Endothelial cell of umbilical vein (primary cell): ENCODE measurements at regions of chr16 and their contacts with region 1.

Region 1: DNA sequence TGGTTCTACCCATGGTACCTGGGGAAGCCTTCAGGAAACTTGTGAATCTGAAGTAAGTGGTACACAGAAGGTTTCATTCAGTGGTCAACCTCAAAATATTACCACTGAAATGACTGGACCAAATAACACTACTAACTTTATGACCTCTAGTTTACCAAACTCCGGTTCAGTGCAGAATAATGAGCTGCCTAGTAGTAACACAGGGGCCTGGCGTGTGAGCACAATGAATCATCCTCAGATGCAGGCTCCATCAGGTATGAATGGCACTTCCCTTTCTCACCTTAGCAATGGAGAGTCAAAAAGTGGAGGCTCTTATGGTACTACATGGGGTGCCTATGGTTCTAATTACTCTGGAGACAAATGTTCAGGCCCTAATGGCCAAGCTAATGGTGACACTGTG is 55.9 kb upstream of the SLC5A11 start:
- DNase-seq: no peak
- H3K4me3 ChIP-seq: no peak overlapping the region
- H3K27ac ChIP-seq: no peak overlapping the region
- H3K4me1 ChIP-seq: no peaks in the 10 kb centered on the region
- H3K27me3 ChIP-seq: no peaks in the 10 kb centered on the region
- CTCF ChIP-seq: no peak
- POLR2A ChIP-seq: no peak

Region 2: DNA sequence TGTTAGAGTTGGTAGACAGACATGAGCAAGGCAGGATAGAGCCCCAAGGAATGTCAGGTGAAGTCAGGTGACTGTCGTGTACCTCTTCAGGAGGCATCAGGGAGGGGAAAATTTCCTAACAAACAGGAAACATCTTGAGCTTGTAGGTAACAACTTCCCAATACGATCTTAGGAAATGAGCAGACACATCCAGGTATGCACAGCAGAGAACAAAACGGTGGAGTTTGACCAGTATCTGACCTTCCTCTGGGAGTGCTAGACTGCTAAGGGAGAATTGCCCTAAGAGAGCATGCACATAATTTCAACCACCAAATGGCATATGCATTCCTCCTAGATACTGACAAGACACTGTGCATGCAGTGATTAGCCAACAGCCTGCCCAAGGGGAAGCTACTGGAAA is 371.2 kb before region 1 on chr16:
- CTCF ChIA-PET with region 1: no interaction called
- POLR2A ChIA-PET with region 1: no interaction called
- dilution Hi-C with region 1: no loop called
- intact Hi-C with region 1: no loop called
- DNase-seq: no peak
- H3K4me3 ChIP-seq: no peak overlapping the region
- H3K27ac ChIP-seq: no peak overlapping the region
- H3K4me1 ChIP-seq: no peaks in the 10 kb centered on the region
- H3K27me3 ChIP-seq: no peaks in the 10 kb centered on the region
- CTCF ChIP-seq: no peak
- POLR2A ChIP-seq: no peak

Region 3: DNA sequence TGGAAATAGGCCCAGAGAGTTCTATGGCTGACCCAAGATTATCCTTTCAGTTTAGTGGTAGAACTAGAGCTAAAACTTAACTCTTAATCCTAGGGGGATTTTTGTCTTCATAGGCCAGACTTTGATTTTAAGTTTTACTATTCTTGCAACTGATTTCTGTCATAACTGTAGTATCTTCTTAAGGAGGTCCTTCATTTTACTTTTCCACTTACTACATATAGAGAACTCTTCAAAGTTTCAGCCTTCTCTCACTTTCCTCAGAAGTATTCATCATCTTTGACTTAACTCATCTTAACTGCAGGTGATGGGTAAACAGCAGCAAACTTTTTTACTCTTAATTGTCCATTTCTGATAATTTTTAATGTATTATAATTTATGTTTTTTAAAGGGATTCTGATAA is 227.1 kb before region 1 on chr16:
- CTCF ChIA-PET with region 1: interaction called, 3 read pairs
- POLR2A ChIA-PET with region 1: no interaction called
- dilution Hi-C with region 1: no loop called
- intact Hi-C with region 1: loop called (anchors 5 kb)
- DNase-seq: no peak
- H3K4me3 ChIP-seq: no peak overlapping the region
- H3K27ac ChIP-seq: no peak overlapping the region
- H3K4me1 ChIP-seq: peaks cover under 1% of the 10 kb centered on the region
- H3K27me3 ChIP-seq: no peaks in the 10 kb centered on the region
- CTCF ChIP-seq: no peak
- POLR2A ChIP-seq: no peak

Region 4: GRCh38 chr16:24753437-24753836 is 36.4 kb before region 1 on chr16:
- CTCF ChIA-PET with region 1: no interaction called
- POLR2A ChIA-PET with region 1: no interaction called
- dilution Hi-C with region 1: no loop called
- intact Hi-C with region 1: no loop called
- DNase-seq: peak; percentile 26
- H3K4me3 ChIP-seq: no peak overlapping the region
- H3K27ac ChIP-seq: no peak overlapping the region
- H3K4me1 ChIP-seq: peaks cover 19% of the 10 kb centered on the region
- H3K27me3 ChIP-seq: no peaks in the 10 kb centered on the region
- CTCF ChIP-seq: no peak
- POLR2A ChIP-seq: no peak